CD14-positive monocyte (primary cell): ENCODE measurements at regions of chr17 and their contacts with region 1.

Region 1: DNA sequence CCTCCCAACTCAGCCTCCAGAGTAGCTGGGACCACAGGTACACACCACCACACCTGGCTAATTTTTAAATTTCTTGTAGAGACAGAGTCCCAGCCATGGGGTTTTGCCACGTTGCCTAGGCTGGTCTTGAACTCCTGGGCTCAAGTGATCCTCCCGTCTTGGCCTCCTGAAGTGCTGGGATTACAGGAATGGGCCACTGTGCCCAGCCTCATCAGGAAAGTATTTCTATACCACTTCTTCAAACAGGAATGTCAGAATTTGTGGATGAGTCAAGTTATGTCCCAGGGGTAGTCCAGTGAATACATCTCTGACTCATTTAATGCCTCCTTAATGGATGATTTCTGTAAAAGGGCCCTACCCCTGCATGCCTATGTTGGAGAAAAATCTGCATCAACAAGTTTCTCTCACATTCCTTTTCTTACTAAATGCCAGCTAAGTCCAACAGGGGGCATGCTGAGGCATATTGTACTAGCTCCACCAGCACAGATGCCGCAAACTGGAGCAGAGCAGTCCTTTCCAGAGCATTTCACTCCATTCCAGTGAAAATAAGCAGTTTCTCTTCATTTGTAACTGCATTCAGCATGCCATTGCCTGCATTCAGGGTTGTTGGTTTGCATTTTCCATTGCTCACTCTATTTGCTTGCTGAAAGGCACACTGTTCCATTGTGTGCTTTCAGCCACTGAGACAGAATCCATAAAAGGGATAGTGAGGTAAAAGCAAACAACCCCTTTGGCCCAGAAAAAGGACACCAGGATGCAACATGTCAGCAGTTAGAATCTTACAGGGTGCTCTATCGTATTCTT is 5.3 kb upstream of the CAVIN1 start:
- DNase-seq: peak; percentile 34 to 52 (median 46)
- H3K4me3 ChIP-seq: no peak overlapping the region
- H3K4me3 Mint-ChIP-seq: no peak overlapping the region
- H3K27ac ChIP-seq: no peak overlapping the region
- H3K27ac Mint-ChIP-seq: no peak overlapping the region
- H3K4me1 ChIP-seq: peaks cover 5 to 10% of the 10 kb centered on the region in 2 donors
- H3K4me1 Mint-ChIP-seq: peaks cover 8% of the 10 kb centered on the region
- H3K27me3 ChIP-seq: peaks cover 7 to 22% of the 10 kb centered on the region in 2 donors
- H3K27me3 Mint-ChIP-seq: peaks cover 30 to 52% (median 33%) of the 10 kb centered on the region in 3 donors
- CTCF ChIP-seq: peak; percentile 78

Region 2: DNA sequence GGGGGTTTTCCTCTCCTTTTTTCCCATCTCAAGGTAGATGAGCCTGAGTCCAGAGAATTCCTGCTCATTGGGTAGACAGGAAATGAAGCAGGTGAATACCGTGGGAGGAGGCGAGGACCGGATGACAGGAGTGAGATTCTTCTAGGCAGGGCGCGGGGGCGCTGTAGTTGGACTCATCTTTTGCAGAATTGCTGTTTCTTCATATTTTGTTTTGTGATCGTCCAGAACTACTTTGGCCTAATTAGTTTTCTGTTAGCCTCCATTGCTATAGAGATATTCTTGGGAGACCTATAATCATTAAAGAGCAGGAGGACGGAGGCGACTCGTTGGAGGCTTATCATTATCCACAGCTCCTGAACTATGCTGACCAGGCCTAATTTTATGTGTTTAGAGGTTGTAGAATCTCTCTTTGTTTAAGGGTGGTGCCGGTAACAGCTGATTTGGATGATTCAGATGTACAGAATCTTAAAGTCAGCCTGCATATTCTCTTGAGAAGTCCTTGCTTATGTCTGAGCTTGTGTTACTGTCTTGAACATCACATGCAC is 31.0 kb after region 1 on chr17:
- intact Hi-C with region 1: loop called in 1 of 2 experiments (anchors 5 kb)
- DNase-seq: peak in 1 of 3 donors; percentile 15
- H3K4me3 ChIP-seq: peak overlapping the region; percentile 80 to 96 (median 87)
- H3K4me3 Mint-ChIP-seq: peak overlapping the region; percentile 97 to 98
- H3K27ac ChIP-seq: peak overlapping the region; percentile 82 to 84
- H3K27ac Mint-ChIP-seq: peak overlapping the region; percentile 91 to 99 (median 97)
- H3K4me1 ChIP-seq: peaks cover 58 to 63% of the 10 kb centered on the region in 2 donors
- H3K4me1 Mint-ChIP-seq: peaks cover 60% of the 10 kb centered on the region
- H3K27me3 ChIP-seq: no peaks in the 10 kb centered on the region
- H3K27me3 Mint-ChIP-seq: peaks cover 0 to 2% (median 0%) of the 10 kb centered on the region in 3 donors
- CTCF ChIP-seq: peak; percentile 35